Posterior vena cava (tissue), 2 donors: ENCODE measurements at regions of chr3 and their contacts with region 1.

Region 1: GRCh38 chr3:55357796-55358195 is 129.3 kb downstream of the WNT5A start:
- DNase-seq: no peak

Region 2: DNA sequence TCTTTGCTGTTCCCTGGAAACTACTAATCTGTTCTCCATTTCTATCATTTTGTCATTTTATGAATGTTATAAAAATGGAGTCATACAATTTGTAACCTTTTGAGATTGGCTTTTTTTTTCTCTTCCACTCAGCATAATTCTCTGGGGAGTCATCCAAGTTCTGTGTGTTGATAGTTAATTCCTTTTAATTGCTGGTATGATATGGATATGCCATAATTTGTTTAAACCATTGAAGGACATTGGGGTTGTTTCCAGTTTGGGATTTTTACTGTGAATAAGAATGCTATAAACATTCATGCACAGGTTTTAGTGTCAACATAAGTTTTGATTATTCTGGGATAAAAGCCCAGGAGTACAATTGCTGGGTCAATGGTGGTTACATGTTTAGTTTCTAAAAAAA is 150.1 kb before region 1 on chr3:
- intact Hi-C with region 1: no loop called
- DNase-seq: no peak

Region 3: DNA sequence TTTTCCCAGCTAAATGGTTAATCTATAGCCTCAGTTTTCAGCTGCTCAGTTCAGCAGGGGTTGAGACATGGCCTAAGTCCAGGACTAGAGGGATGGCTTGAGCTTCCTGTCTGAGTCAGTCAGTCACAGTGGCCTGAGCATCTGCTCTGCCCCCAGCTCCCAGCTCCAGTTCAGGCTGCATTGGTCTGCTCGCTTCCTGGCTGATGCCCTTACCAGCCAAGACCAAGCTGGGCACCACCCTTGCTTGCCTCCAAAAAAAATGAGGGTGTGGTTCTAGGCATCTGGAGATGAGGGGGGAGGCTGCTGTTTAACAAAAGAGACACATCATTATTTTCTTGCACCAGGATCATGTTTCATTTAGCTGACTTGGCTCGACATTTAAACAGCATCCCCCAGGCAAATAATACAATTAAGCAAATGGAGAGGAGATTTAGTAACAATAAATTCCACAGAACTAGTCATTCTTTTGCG is 58.6 kb after region 1 on chr3:
- intact Hi-C with region 1: loop called in 1 of 2 experiments (anchors 2 kb)
- DNase-seq: no peak